PC-9 (cell line): ENCODE measurements at regions of chr11 and their contacts with region 1.

Region 1: DNA sequence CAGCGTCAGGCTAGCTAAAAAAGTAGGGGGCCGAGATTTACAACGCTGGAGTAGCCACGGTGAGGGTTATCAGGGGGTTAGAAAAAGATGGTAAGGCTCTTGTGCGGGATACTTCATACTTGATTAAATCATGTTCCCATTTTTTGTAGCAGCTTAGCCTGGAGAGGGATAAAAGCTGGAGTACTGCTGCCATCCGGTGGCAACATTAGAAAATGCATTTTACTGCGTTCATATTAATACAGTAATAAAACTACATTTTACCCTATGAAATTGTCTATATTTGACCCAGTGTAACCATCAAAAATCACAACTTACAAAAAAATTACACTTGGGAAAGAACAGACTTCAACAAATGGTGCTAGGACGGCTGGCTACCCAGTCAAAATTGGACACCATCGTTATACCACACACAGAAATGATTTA is 17.3 kb downstream of the RPUSD4 start:
- DNase-seq: peak in 1 of 2 experiments; percentile 48
- H3K4me3 ChIP-seq: no peak overlapping the region
- H3K27ac ChIP-seq: no peak overlapping the region
- H3K4me1 ChIP-seq: no peaks in the 10 kb centered on the region
- H3K27me3 ChIP-seq: no peaks in the 10 kb centered on the region
- CTCF ChIP-seq: peak; percentile 87

Region 2: DNA sequence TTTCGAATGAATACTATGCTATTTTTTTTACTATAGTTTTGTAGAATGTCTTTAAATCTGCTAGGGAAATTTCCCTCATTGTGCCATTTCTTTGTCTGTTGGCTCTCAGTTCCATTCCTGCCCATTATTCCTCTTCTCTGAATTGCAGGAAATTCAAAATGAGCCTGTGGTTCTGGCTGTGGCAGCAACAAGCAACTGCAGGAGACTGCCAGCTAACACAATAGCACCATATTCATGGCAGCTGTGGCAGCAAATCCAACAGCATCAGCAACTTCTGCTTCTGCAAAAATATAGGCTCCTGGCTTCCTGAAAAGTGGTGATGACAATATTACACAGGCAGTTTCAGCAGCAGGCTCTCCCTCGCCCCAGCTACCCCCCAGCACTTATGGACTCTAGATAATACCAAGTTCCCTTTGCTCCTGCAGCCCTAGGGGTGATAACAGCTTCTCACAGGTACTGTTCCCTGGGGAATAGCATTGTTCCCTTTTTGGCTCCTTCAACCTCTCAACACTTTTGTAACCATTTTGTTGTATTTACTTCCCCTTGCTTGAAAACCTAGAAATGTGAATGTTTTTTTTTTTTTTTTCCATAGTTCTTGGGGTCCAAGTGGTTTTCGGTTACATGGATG is 351.7 kb before region 1 on chr11:
- CTCF ChIA-PET with region 1: no interaction called
- POLR2A ChIA-PET with region 1: no interaction called
- intact Hi-C with region 1: no loop called
- DNase-seq: no peak
- H3K4me3 ChIP-seq: no peak overlapping the region
- H3K27ac ChIP-seq: no peak overlapping the region
- H3K4me1 ChIP-seq: no peaks in the 10 kb centered on the region
- H3K27me3 ChIP-seq: 0 out of 2 replicates have a peak, but pooled peaks cover 5% of the 10 kb centered on the region
- CTCF ChIP-seq: no peak

Region 3: DNA sequence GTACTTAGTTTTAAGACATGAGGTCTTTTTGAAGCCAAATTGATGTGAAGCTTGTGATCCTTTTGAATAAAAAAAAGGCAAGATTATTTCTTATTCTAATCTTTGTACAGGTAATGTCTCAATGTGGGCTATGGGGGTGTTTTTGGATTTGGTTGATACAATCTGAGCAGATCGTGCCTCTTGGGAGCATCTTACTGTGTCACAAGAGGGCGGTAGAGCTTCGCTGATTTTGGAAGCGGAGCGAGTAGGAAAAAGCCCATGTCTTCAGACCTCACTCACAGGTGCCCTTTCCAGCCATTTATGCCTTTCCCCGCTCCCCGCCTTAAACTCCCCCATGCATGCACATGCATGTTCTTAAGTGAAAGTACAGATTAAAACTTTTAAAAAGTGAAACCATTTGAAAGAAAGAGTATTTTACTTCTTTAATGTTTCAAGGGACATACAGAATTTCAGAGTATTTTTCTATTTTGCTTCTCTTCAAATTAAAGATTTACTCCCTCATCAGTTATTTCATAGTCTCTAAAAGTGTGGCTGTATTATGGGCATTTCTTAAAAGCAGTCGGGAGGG is 271.0 kb before region 1 on chr11:
- CTCF ChIA-PET with region 1: interaction called, 3 read pairs
- POLR2A ChIA-PET with region 1: no interaction called
- intact Hi-C with region 1: loop called (anchors 1 kb)
- DNase-seq: peak; percentile 60 to 61
- H3K4me3 ChIP-seq: no peak overlapping the region
- H3K27ac ChIP-seq: no peak overlapping the region
- H3K4me1 ChIP-seq: no peaks in the 10 kb centered on the region
- H3K27me3 ChIP-seq: peaks cover 21% of the 10 kb centered on the region
- CTCF ChIP-seq: peak; percentile 84

Region 4: DNA sequence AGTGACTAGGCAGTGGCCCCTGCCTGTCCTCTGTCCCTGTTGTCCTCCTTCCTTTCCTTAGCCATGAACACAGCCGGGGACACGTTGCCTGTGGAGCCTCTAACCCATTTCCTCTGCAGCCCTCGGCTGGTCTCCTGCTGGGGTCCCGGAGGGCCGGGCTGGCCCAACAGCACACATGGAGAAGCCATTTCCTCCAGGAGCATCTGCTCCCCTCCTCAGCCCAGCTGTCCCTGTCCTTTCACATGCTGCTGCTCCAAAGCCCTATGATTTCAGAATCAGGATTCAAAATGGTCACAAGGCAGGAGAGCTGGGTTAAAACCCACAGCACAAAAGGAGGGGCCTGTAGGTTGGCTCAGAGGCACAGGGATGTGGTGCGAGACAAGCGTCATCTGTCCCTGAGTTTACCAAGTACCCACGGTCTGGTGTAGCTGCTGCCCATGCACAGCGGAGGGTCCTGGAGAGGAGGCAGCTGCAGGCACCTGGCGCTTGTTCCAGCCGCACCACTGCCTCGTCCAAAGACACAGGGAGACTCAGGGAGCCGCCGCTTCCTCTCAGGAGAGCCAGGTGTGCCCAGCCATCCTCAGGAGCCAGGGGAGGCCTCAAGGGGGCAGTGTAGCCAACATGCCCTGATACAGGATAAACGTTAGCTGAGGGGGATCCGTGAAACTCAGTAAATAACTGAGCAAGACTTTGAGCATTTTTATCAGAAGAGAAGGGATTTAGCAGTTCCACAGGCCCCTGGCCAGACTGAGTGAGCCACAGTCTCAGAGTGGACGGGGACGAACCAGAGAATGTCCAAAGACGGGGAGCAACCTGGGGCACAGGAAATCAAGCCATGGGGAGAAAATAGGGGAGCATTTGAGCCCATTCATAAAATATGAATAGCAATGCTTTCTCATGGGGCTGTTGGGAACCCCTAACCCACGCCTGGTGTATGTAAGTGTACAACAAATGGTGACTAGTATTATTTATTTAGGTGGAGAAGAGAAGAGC is 252.2 kb before region 1 on chr11:
- CTCF ChIA-PET with region 1: no interaction called
- POLR2A ChIA-PET with region 1: no interaction called
- intact Hi-C with region 1: loop called (anchors 1 kb)
- DNase-seq: peak in 1 of 2 experiments; percentile 51
- H3K4me3 ChIP-seq: no peak overlapping the region
- H3K27ac ChIP-seq: no peak overlapping the region
- H3K4me1 ChIP-seq: no peaks in the 10 kb centered on the region
- H3K27me3 ChIP-seq: no peaks in the 10 kb centered on the region
- CTCF ChIP-seq: peak; percentile 81